Heart right ventricle (tissue), 16 donors: ENCODE measurements at regions of chr5 and their contacts with region 1.

Region 1: DNA sequence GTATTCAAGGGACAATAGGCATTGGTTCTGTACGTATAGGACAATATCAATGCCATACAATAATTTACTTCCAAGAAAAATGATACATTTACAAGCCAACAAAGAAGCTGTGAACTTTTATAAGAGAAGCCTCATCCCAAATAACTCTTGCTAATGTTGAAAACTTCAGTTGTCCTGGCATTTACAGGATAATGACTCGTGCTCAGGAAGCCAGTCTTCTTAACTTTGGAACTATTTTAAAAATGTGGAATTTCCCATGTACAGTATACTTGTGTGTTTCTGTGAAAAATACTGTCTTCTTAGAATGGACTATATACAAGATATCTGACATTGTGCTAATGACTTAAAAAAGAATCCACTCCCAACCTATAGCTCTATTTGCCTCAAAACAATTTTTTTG is 1479.3 kb upstream of the CDH9 start:
- DNase-seq: no peak
- ATAC-seq: no peak
- H3K4me3 ChIP-seq: no peak overlapping the region
- H3K27ac ChIP-seq: no peak overlapping the region
- H3K4me1 ChIP-seq: no peaks in the 10 kb centered on the region
- H3K27me3 ChIP-seq: no peaks in the 10 kb centered on the region
- CTCF ChIP-seq: no peak

Region 2: GRCh38 chr5:28305891-28306290 is 211.8 kb before region 1 on chr5:
- intact Hi-C with region 1: loop called in 1 of 10 experiments (anchors 5 kb)
- DNase-seq: no peak
- ATAC-seq: no peak
- H3K4me3 ChIP-seq: no peak overlapping the region
- H3K27ac ChIP-seq: no peak overlapping the region
- H3K4me1 ChIP-seq: no peaks in the 10 kb centered on the region
- H3K27me3 ChIP-seq: no peaks in the 10 kb centered on the region
- CTCF ChIP-seq: no peak

Region 3: GRCh38 chr5:29079771-29080170 is 562.1 kb after region 1 on chr5:
- intact Hi-C with region 1: no loop called
- DNase-seq: no peak
- ATAC-seq: no peak
- H3K4me3 ChIP-seq: no peak overlapping the region
- H3K27ac ChIP-seq: no peak overlapping the region
- H3K4me1 ChIP-seq: no peaks in the 10 kb centered on the region
- H3K27me3 ChIP-seq: no peaks in the 10 kb centered on the region
- CTCF ChIP-seq: no peak